Heart left ventricle (tissue), 16 donors: ENCODE measurements at regions of chr5 and their contacts with region 1.

Region 1: GRCh38 chr5:173887610-173888472 is at the start of gene CPEB4:
- DNase-seq: peak; percentile 99 to 100 (median 99)
- ATAC-seq: peak; percentile 95 to 97 (median 96)
- H3K4me3 ChIP-seq: peak within 1 kb of the TSS; percentile 45 to 96 (median 78)
- H3K27ac ChIP-seq: peak within 1 kb of the TSS; percentile 80 to 98 (median 92)
- H3K4me1 ChIP-seq: peaks cover 0 to 76% (median 19%) of the 10 kb centered on the region in 12 donors
- H3K27me3 ChIP-seq: no peaks in the 10 kb centered on the region
- CTCF ChIP-seq: peak in 1 of 12 donors; percentile 6
- POLR2A ChIP-seq: peak; percentile 93 to 99
- total RNA-seq, gene CPEB4: 104 to 217 (median 172) TPM

Region 2: GRCh38 chr5:173245319-173246134 is 642.3 kb before region 1 on chr5:
- intact Hi-C with region 1: no loop called
- DNase-seq: peak in 2 of 5 donors; percentile 37 to 56
- ATAC-seq: peak; percentile 13 to 50 (median 48)
- H3K4me3 ChIP-seq: peak overlapping the region in 9 of 12 donors; percentile 38 to 60 (median 49)
- H3K27ac ChIP-seq: peak overlapping the region; percentile 76 to 98 (median 90)
- H3K4me1 ChIP-seq: peaks cover 0 to 38% (median 7%) of the 10 kb centered on the region in 12 donors
- H3K27me3 ChIP-seq: peaks cover 7 to 99% (median 38%) of the 10 kb centered on the region in 9 donors
- CTCF ChIP-seq: no peak
- POLR2A ChIP-seq: no peak

Region 3: GRCh38 chr5:173625696-173626504 is 261.9 kb before region 1 on chr5:
- intact Hi-C with region 1: loop called in 2 of 10 experiments (anchors 10 kb)
- DNase-seq: peak in 1 of 5 donors; percentile 31
- ATAC-seq: peak; percentile 60 to 82 (median 68)
- H3K4me3 ChIP-seq: no peak overlapping the region
- H3K27ac ChIP-seq: peak overlapping the region in 5 of 12 donors; percentile 1 to 54 (median 36)
- H3K4me1 ChIP-seq: peaks cover 0 to 17% (median 5%) of the 10 kb centered on the region in 12 donors
- H3K27me3 ChIP-seq: no peaks in the 10 kb centered on the region
- CTCF ChIP-seq: peak in 6 of 12 donors; percentile 6 to 44 (median 19)
- POLR2A ChIP-seq: no peak

Region 4: GRCh38 chr5:173764321-173765029 is 123.4 kb before region 1 on chr5:
- intact Hi-C with region 1: loop called in 7 of 10 experiments (anchors 2 to 5 kb)
- DNase-seq: peak; percentile 66 to 90 (median 86)
- ATAC-seq: peak; percentile 11 to 76 (median 67)
- H3K4me3 ChIP-seq: no peak overlapping the region
- H3K27ac ChIP-seq: peak overlapping the region in 11 of 12 donors; percentile 68 to 95 (median 78)
- H3K4me1 ChIP-seq: peaks cover 0 to 40% (median 19%) of the 10 kb centered on the region in 12 donors
- H3K27me3 ChIP-seq: no peaks in the 10 kb centered on the region
- CTCF ChIP-seq: peak in 1 of 12 donors; percentile 8
- POLR2A ChIP-seq: no peak

Region 5: GRCh38 chr5:173917788-173918786 is 30.2 kb after region 1 on chr5:
- intact Hi-C with region 1: loop called in 5 of 10 experiments (anchors 2 to 5 kb)
- DNase-seq: peak; percentile 49 to 66 (median 57)
- ATAC-seq: peak; percentile 57 to 81 (median 76)
- H3K4me3 ChIP-seq: peak overlapping the region; percentile 2 to 60 (median 50)
- H3K27ac ChIP-seq: peak overlapping the region; percentile 19 to 89 (median 86)
- H3K4me1 ChIP-seq: peaks cover 2 to 89% (median 76%) of the 10 kb centered on the region in 12 donors
- H3K27me3 ChIP-seq: no peaks in the 10 kb centered on the region
- CTCF ChIP-seq: no peak
- POLR2A ChIP-seq: no peak

Region 6: DNA sequence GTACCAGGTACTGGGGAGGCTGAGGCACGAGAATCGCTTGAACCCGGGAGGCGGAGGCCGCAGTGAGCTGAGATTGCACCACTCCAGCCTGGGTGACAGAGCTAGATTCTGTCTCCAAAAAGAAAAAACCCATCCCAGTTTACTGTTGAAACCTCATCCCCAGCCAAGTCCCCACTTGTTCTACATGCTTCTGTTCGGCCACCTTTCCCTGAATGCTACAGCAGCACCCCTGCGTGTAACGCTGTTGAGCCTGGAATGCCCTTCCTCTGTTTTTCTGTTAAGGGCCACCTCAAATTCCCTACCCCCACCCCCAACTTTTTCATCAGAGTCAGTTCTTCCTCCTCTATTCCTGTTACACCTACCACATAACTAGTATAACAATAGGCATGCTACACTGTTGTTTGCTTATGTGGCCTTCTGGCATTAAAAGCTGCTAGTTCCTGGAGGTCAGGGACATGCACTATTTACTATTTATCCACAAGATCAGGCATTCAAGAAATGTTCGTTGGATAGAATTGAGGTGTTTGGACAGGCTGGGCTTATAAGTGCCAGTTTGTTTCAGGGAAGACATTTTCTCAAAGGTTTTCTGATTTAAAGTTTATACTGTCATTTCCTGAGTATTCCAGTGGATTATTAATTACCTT is 54.0 kb after region 1 on chr5:
- intact Hi-C with region 1: loop called in 1 of 10 experiments (anchors 10 kb)
- DNase-seq: no peak
- ATAC-seq: peak; percentile 4 to 40 (median 34)
- H3K4me3 ChIP-seq: no peak overlapping the region
- H3K27ac ChIP-seq: peak overlapping the region in 7 of 12 donors; percentile 1 to 65 (median 30)
- H3K4me1 ChIP-seq: peaks cover 0 to 61% (median 35%) of the 10 kb centered on the region in 12 donors
- H3K27me3 ChIP-seq: no peaks in the 10 kb centered on the region
- CTCF ChIP-seq: no peak
- POLR2A ChIP-seq: no peak

Region 7: DNA sequence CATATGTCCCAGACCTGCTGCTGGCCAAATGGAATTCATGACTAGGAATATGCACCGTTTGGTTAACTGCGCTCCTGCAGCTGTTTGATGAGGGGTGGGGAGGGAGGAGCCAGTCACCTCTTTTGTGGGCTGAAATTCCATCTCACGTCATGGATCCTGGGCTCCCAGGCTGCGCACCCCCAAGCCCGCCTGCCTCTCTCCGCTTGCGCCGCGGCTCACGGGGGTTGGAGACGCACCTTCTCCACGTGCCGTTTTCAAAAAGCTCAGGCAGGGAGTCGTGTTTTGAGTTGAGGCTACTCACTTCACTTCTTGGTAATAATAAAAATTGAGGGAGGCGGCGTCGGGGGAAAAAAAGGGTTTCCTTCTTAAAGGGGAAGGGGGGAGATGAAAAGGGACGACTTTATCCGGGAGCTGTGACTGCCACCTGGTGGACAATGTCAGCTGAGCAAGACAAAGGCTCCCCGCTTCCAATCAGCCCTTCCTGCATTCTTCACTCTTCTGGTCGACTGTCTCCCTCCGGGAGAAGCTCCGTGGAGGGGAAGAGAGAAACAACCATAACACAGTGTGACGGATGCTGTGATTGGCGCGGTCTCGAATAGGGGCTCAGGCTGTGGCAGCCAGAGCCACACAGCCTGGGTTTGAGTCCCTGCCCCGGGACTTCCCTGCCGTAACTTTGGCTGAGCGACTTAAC is 85.2 kb after region 1 on chr5:
- intact Hi-C with region 1: loop called in 6 of 10 experiments (anchors 2 to 5 kb)
- DNase-seq: peak; percentile 78 to 84 (median 80)
- ATAC-seq: peak; percentile 73 to 84 (median 80)
- H3K4me3 ChIP-seq: peak overlapping the region in 11 of 12 donors; percentile 33 to 65 (median 51)
- H3K27ac ChIP-seq: peak overlapping the region in 10 of 12 donors; percentile 1 to 83 (median 65)
- H3K4me1 ChIP-seq: peaks cover 0 to 25% (median 9%) of the 10 kb centered on the region in 12 donors
- H3K27me3 ChIP-seq: peaks cover 0 to 4% (median 0%) of the 10 kb centered on the region in 9 donors
- CTCF ChIP-seq: peak; percentile 66 to 93 (median 86)
- POLR2A ChIP-seq: no peak

Region 8: GRCh38 chr5:175689147-175689991 is 1801.5 kb after region 1 on chr5:
- intact Hi-C with region 1: no loop called
- DNase-seq: peak in 2 of 5 donors; percentile 63 to 91
- ATAC-seq: peak in 3 of 4 donors; percentile 5 to 58 (median 51)
- H3K4me3 ChIP-seq: no peak overlapping the region
- H3K27ac ChIP-seq: peak overlapping the region in 11 of 12 donors; percentile 42 to 88 (median 77)
- H3K4me1 ChIP-seq: peaks cover 0 to 75% (median 47%) of the 10 kb centered on the region in 12 donors
- H3K27me3 ChIP-seq: no peaks in the 10 kb centered on the region
- CTCF ChIP-seq: no peak
- POLR2A ChIP-seq: peak in 1 of 2 donors; percentile 23